Activated CD8-positive, alpha-beta memory T cell treated with anti-CD3 and anti-CD28 coated beads, Interleukin-2, amount 10 ng/mL, durations not matched to agents 7 days and 5 days (primary cell): ENCODE measurements at regions of chr7 and their contacts with region 1.

Region 1: DNA sequence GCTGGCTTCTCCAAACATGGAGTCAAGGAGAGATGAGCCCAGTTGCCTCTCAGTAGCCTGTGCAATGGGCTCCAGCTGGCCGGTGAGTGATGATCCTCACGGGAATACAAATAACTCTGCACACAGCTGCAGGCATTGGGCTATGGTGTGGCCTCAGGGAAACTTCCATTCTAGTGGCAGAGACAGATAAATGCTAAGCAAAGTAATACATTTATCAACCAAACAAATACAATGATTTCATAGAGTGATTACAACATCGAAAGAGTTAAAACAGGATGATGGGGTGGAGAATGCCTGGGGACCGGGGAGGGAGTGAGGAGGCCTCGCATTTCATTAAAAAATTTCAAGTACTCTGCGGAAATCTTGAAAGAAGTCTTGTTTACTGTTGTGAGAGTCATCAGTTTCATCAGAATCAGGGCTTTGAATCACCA is 15.0 kb upstream of the AKR1B1 start:
- DNase-seq: no peak
- ATAC-seq: no peak
- H3K4me3 Mint-ChIP-seq: no peak overlapping the region
- H3K27ac Mint-ChIP-seq: no peak overlapping the region
- H3K4me1 Mint-ChIP-seq: no peaks in the 10 kb centered on the region
- H3K27me3 Mint-ChIP-seq: peaks cover 9% of the 10 kb centered on the region

Region 2: GRCh38 chr7:134197345-134197744 is 276.5 kb before region 1 on chr7:
- CTCF ChIA-PET with region 1: no interaction called
- DNase-seq: no peak
- ATAC-seq: no peak
- H3K4me3 Mint-ChIP-seq: no peak overlapping the region
- H3K27ac Mint-ChIP-seq: no peak overlapping the region
- H3K4me1 Mint-ChIP-seq: no peaks in the 10 kb centered on the region
- H3K27me3 Mint-ChIP-seq: peaks cover 5% of the 10 kb centered on the region

Region 3: GRCh38 chr7:134444198-134444871 is 29.5 kb before region 1 on chr7:
- CTCF ChIA-PET with region 1: no interaction called
- DNase-seq: peak; percentile 19
- ATAC-seq: no peak
- H3K4me3 Mint-ChIP-seq: no peak overlapping the region
- H3K27ac Mint-ChIP-seq: no peak overlapping the region
- H3K4me1 Mint-ChIP-seq: no peaks in the 10 kb centered on the region
- H3K27me3 Mint-ChIP-seq: no peaks in the 10 kb centered on the region

Region 4: GRCh38 chr7:134458806-134459698 is 14.8 kb before region 1 on chr7 and contains the start of gene AKR1B1:
- CTCF ChIA-PET with region 1: interaction called, 10 read pairs
- DNase-seq: peak; percentile 93
- ATAC-seq: peak; percentile 93
- H3K4me3 Mint-ChIP-seq: peak within 1 kb of the TSS; percentile 81
- H3K27ac Mint-ChIP-seq: peak within 1 kb of the TSS; percentile 72
- H3K4me1 Mint-ChIP-seq: peaks cover 43% of the 10 kb centered on the region
- H3K27me3 Mint-ChIP-seq: no peaks in the 10 kb centered on the region
- total RNA-seq, gene AKR1B1: 96.2 to 113 TPM

Region 5: GRCh38 chr7:134491963-134492362 is 18.1 kb after region 1 on chr7:
- CTCF ChIA-PET with region 1: no interaction called
- DNase-seq: no peak
- ATAC-seq: no peak
- H3K4me3 Mint-ChIP-seq: no peak overlapping the region
- H3K27ac Mint-ChIP-seq: no peak overlapping the region
- H3K4me1 Mint-ChIP-seq: peaks cover 1% of the 10 kb centered on the region
- H3K27me3 Mint-ChIP-seq: peaks cover 42% of the 10 kb centered on the region